Heart right ventricle (tissue), 16 donors: ENCODE measurements at regions of chr15 and their contacts with region 1.

Region 1: DNA sequence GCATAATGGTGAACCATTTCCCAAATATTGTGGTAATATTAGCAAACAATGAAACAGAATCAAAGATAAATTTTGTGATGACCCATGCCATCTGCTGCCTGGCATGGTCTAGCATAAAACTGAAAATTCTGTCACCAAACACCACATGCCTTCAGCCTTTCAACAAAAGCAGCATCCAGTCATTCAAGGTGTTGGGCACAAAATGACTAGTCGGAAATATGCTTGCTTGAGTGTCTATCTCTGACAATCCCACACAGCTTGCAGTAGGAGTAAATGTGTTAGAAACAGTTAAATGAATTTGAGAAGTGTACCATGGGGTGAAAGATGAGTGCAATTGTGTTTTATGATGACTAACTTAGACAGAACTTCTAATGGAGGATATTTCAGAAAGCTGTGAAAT is 61.7 kb upstream of the CDIN1 start:
- DNase-seq: no peak
- ATAC-seq: no peak
- H3K4me3 ChIP-seq: no peak overlapping the region
- H3K27ac ChIP-seq: no peak overlapping the region
- H3K4me1 ChIP-seq: no peaks in the 10 kb centered on the region
- H3K27me3 ChIP-seq: no peaks in the 10 kb centered on the region
- CTCF ChIP-seq: no peak

Region 2: GRCh38 chr15:35867356-35867755 is 650.4 kb before region 1 on chr15:
- intact Hi-C with region 1: no loop called
- DNase-seq: no peak
- ATAC-seq: no peak
- H3K4me3 ChIP-seq: no peak overlapping the region
- H3K27ac ChIP-seq: no peak overlapping the region
- H3K4me1 ChIP-seq: no peaks in the 10 kb centered on the region
- H3K27me3 ChIP-seq: no peaks in the 10 kb centered on the region
- CTCF ChIP-seq: no peak

Region 3: GRCh38 chr15:36479200-36479896 is 38.4 kb before region 1 on chr15:
- intact Hi-C with region 1: no loop called
- DNase-seq: no peak
- ATAC-seq: no peak
- H3K4me3 ChIP-seq: no peak overlapping the region
- H3K27ac ChIP-seq: no peak overlapping the region
- H3K4me1 ChIP-seq: no peaks in the 10 kb centered on the region
- H3K27me3 ChIP-seq: no peaks in the 10 kb centered on the region
- CTCF ChIP-seq: no peak

Region 4: GRCh38 chr15:36658312-36658711 is 140.6 kb after region 1 on chr15:
- intact Hi-C with region 1: loop called in 1 of 10 experiments (anchors 10 kb)
- DNase-seq: no peak
- ATAC-seq: no peak
- H3K4me3 ChIP-seq: no peak overlapping the region
- H3K27ac ChIP-seq: no peak overlapping the region
- H3K4me1 ChIP-seq: peaks cover 0 to 13% (median 0%) of the 10 kb centered on the region in 9 donors
- H3K27me3 ChIP-seq: no peaks in the 10 kb centered on the region
- CTCF ChIP-seq: no peak

Region 5: GRCh38 chr15:36844534-36844998 is 326.8 kb after region 1 on chr15:
- intact Hi-C with region 1: no loop called
- DNase-seq: no peak
- ATAC-seq: no peak
- H3K4me3 ChIP-seq: no peak overlapping the region
- H3K27ac ChIP-seq: no peak overlapping the region
- H3K4me1 ChIP-seq: no peaks in the 10 kb centered on the region
- H3K27me3 ChIP-seq: no peaks in the 10 kb centered on the region
- CTCF ChIP-seq: no peak